Lower leg skin (tissue), 4 donors: ENCODE measurements at regions of chr19 and their contacts with region 1.

Region 1: DNA sequence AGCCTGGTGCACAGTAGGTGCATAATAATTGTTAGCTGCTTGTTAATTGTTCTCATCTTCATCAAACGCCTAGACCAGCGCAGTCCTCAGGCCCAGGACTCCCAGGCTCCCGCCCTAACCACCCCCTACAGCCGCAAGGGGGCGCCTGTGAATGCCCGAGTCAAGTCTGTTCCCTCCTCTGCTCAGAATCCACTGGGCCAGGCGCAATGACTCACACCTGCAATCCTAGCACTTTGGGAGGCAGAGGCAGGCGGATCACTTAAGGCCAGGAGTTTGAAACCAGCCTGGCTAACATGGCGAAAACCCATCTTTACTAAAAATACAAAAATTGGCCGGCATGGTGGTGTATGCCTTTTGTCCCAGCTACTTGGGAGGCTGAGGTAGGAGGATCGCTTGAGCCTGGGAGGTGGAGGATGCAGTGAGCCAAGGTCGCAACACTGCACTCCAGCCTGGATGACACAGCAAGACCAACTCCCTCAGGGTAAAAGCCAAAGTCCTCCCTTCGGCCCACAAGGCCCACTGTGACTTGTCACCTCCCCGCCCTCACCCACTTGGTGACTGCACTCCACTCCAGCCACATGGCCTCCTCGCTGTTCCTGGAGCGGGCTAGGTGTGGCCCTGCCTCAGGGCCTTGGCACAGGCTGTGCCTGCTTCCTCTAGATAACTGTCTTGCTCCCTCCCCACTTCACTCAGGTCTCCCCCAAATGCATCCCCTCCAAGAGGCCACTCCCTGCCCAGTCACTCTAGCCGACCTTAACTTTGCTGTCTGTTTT is 9.1 kb downstream of the ZNF653 start:
- DNase-seq: peak in 1 of 2 donors; percentile 91
- H3K4me3 ChIP-seq: no peak overlapping the region
- CTCF ChIP-seq: no peak
- POLR2A ChIP-seq: no peak

Region 2: DNA sequence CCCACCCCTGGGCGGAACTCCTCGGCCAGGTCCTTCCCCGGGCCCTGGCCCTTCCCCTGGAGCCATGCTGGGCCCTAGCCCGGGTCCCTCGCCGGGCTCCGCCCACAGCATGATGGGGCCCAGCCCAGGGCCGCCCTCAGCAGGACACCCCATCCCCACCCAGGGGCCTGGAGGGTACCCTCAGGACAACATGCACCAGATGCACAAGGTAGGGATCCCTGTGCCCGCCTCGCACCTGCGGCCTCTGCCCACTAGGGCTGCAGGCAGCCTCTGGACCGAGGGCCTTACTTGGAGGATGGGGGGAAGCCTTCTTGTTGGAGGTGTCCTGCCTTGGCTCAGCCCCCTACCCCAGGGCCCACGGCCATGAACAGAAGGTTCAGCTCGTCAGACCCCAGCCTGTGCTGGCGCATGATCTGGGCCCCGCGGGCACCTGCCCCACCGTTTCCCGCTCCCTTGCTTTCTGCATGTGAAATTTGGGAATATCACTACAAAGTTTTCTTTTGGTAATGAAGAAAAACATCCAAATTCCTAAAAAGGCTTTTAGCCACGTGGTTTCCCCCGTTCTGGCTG is 512.3 kb before region 1 on chr19:
- intact Hi-C with region 1: no loop called
- DNase-seq: no peak
- H3K4me3 ChIP-seq: no peak overlapping the region
- CTCF ChIP-seq: no peak
- POLR2A ChIP-seq: no peak

Region 3: DNA sequence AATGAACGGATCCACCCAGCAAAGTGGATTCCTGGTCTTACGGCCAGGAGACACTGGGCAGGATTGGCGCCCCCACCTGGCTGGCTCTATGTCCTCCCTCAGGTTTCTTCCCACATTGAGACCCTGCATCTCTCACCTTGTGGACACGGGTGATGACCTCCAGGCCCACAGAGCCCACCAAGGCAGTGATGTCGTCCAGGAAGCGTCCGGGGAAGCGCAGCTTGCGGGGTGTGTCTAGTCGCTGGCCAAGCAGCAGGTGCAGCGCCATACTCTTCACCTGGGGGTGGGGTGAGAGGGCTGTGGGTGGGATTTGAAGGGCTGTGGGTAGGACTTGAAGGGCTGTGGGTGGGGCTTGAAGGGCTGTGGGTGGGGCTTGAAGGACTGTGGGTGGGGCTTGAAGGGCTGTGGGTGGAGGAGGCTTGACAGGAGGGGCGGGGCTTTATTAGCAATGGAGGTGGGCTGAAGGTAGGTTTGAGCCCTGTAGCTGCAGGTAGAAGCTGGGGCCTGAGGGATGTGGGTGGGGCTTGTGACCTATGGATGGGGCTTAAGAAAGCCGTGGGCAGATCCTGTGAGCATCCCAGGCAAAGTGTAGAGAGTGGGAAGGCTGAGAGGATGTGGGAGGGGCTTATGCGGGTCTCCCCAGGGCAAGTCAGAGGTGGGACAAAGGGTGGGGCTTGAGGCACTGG is 269.2 kb before region 1 on chr19:
- intact Hi-C with region 1: no loop called
- DNase-seq: no peak
- H3K4me3 ChIP-seq: no peak overlapping the region
- CTCF ChIP-seq: no peak
- POLR2A ChIP-seq: no peak

Region 4: GRCh38 chr19:11587302-11587974 is 90.9 kb after region 1 on chr19:
- intact Hi-C with region 1: loop called (anchors 10 kb)
- DNase-seq: peak; percentile 65 to 93
- H3K4me3 ChIP-seq: no peak overlapping the region
- CTCF ChIP-seq: peak in 1 of 3 donors; percentile 87
- POLR2A ChIP-seq: no peak